ENCODE measurements at regions of chr3 and their contacts with region 1.

Region 1: DNA sequence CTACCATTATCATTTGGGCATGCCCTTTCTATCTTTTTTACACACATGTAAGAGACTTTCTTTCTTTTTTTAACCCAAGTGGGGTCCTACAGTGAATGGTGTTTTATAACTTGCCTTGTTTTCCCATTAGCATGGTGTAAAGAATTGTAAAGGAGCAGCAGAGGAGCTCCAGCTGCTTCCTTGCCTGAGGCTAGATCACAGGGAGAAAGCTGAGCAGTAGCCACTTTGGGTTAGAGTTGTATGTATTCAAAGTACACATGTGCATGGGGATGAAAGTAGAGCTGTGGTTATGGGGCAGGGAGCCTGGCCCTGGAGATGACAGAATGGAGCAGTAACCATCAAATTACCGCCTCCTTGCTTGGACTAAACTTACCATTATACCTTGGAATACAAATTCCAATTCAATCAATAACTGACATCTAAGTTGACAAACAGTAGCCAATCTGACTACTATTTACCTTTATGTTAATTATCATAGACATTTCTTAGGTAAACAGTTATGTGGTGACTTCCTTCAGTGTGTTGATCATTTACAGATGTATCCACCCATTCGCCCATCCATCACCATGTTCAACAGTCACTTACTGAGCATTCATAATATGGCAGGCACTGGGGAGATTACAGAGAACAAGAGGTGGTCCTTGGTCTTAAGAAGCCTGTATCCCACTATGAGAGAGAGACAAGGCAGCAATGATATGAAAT is 231.2 kb upstream of the PDZRN3 start:
- DNase-seq: no peak
- H3K4me3 ChIP-seq: no peak overlapping the region
- H3K27ac ChIP-seq: no peak overlapping the region
- H3K4me1 ChIP-seq: no peaks in the 10 kb centered on the region
- H3K27me3 ChIP-seq: no peaks in the 10 kb centered on the region
- CTCF ChIP-seq: no peak
- POLR2A ChIP-seq: no peak

Region 2: DNA sequence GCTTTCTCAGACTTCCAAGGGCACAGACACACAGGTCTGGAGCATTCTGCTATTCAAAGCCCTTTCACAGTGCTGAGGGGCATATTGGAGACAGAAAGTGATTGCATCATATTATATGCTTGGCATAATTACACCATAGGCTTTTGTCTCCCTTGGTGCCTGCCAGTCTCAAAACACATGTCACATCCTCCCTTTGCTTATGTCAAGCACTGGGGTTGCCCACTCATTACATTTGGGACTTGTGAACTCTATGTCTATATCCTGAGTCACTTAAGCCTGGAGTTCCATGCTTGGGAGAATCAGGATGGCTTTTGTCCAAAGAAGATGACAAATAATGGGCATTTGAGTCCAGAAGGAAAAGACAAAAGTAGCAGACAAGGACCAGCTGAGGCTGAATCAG is 218.9 kb before region 1 on chr3:
- intact Hi-C with region 1: loop called (anchors 10 kb)
- DNase-seq: no peak
- H3K4me3 ChIP-seq: no peak overlapping the region
- H3K27ac ChIP-seq: peak overlapping the region in 1 of 4 donors; percentile 11
- H3K4me1 ChIP-seq: peaks cover 0 to 9% (median 0%) of the 10 kb centered on the region in 3 donors
- H3K27me3 ChIP-seq: no peaks in the 10 kb centered on the region
- CTCF ChIP-seq: no peak
- POLR2A ChIP-seq: no peak

Measured in esophagus squamous epithelium (tissue), 5 donors.